GM18951 (cell line): ENCODE measurements at regions of chr12 and their contacts with region 1.

Region 1: GRCh38 chr12:118189741-118190191 is 53.8 kb downstream of the PEBP1 start:
- POLR2A ChIP-seq: no peak

Region 2: DNA sequence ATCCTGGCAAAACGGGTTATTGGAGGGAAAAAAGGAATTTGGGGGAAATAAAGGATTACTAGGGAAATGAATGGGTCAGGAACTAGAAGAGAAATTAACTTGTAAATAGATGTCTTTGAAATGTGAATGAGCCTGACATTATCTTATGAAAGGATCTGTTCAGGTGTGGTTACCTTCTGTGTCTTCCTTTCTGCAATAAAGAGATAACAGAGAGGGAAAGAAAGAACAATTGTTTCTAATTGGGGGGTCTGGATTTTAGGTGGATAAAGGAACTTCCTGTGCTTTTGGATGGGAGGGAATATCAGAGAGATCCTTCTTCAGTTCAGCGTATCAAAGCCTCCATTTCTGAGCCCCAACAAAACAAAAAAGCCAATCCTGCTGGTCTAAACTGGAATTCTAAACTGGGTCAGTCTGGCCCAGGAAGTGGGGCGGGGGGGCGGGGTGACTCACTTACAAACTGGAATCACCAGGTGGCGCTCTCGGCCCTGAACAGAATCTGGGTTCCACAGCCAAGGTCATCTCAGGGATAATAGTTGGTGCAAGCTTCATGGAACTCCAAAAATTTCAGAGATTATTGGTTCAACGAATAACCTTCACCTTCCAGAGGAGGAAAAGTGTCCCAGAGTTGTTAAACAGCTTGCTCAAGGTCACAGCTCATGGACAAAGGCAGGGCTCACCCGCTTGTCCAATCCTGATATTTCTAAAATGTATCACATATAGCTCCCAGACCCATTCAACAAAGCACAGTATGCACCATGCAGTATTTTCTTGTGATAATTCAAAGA is 69.0 kb before region 1 on chr12:
- in situ Hi-C with region 1: loop called (anchors 10 kb)
- POLR2A ChIP-seq: no peak

Region 3: GRCh38 chr12:118372541-118373495 is 183.1 kb after region 1 on chr12 and contains the start of gene TAOK3:
- in situ Hi-C with region 1: loop called (anchors 10 kb)
- POLR2A ChIP-seq: peak; percentile 94